ENCODE measurements at regions of chr1 and their contacts with region 1.

Region 1: GRCh38 chr1:169546087-169546995 is 39.9 kb downstream of the F5 start:
- DNase-seq: peak; percentile 40
- ATAC-seq: peak; percentile 92
- H3K4me3 ChIP-seq: no peak overlapping the region
- H3K27ac ChIP-seq: no peak overlapping the region
- H3K4me1 ChIP-seq: no peaks in the 10 kb centered on the region
- H3K27me3 ChIP-seq: no peaks in the 10 kb centered on the region
- CTCF ChIP-seq: peak; percentile 63 to 69 (median 66)
- EP300 ChIP-seq: no peak
- POLR2A ChIP-seq: no peak
- RAD21 ChIP-seq: peak; percentile 75

Region 2: DNA sequence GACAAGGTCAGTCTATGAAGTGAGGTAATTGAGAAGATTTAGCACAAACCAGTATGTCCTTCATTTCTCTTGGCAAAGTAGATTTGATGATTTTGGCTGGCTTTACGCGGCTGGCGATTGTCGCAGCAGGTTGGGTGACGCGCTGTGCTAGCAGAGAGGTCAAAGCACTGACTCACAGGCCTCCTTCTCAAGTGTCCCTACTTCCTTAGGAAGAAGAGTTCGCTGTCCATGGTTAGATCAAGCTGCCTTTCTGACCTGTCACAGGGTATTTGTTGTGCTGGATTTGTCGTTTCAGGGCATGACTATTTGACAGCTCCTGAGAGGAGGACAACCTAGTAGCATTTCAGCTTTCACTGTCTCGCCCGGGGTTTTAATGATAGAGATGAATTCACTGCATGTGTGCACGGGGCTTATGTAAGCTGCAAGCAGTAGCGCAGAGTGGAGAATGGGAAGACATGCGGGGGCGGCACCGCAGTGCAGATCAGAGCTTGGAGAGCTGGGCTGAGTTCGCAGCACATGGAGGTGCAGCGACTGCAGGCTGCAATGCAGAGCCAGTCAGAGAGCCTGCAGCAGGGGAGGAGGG is 937.1 kb before region 1 on chr1:
- CTCF ChIA-PET with region 1: interaction called, 15 read pairs
- POLR2A ChIA-PET with region 1: no interaction called
- RAD21 ChIA-PET with region 1: interaction called, 29 read pairs
- SMC1A ChIA-PET with region 1: interaction called, 6 read pairs
- in situ Hi-C with region 1: loop called (anchors 5 kb)
- intact Hi-C with region 1: no loop called
- DNase-seq: no peak
- ATAC-seq: no peak
- H3K4me3 ChIP-seq: no peak overlapping the region
- H3K27ac ChIP-seq: no peak overlapping the region
- H3K4me1 ChIP-seq: no peaks in the 10 kb centered on the region
- H3K27me3 ChIP-seq: peaks cover 0 to 5% of the 10 kb centered on the region in 2 experiments; a peak in 2 of 4 replicates
- CTCF ChIP-seq: no peak
- EP300 ChIP-seq: no peak
- POLR2A ChIP-seq: no peak
- RAD21 ChIP-seq: no peak

Region 3: GRCh38 chr1:169466259-169467230 is 79.8 kb before region 1 on chr1:
- CTCF ChIA-PET with region 1: interaction called, 27 read pairs
- POLR2A ChIA-PET with region 1: no interaction called
- RAD21 ChIA-PET with region 1: interaction called, 8 read pairs
- SMC1A ChIA-PET with region 1: interaction called, 26 read pairs
- in situ Hi-C with region 1: loop called (anchors 5 kb)
- intact Hi-C with region 1: loop called (anchors 1 kb)
- DNase-seq: no peak
- ATAC-seq: peak; percentile 66
- H3K4me3 ChIP-seq: no peak overlapping the region
- H3K27ac ChIP-seq: no peak overlapping the region
- H3K4me1 ChIP-seq: no peaks in the 10 kb centered on the region
- H3K27me3 ChIP-seq: no peaks in the 10 kb centered on the region
- CTCF ChIP-seq: peak; percentile 24 to 47 (median 27); a peak in 3 of 6 replicates
- EP300 ChIP-seq: no peak
- POLR2A ChIP-seq: no peak
- RAD21 ChIP-seq: 0 out of 2 replicates have a peak, but pooled peaks have one; percentile 31

Region 4: GRCh38 chr1:169485544-169486278 is 60.6 kb before region 1 on chr1 and contains the start of gene SLC19A2:
- CTCF ChIA-PET with region 1: interaction called, 4 read pairs
- POLR2A ChIA-PET with region 1: no interaction called
- RAD21 ChIA-PET with region 1: interaction called, 4 read pairs
- SMC1A ChIA-PET with region 1: no interaction called
- in situ Hi-C with region 1: no loop called
- intact Hi-C with region 1: loop called (anchors 1 kb)
- DNase-seq: peak; percentile 91
- ATAC-seq: peak; percentile 98
- H3K4me3 ChIP-seq: peak within 1 kb of the TSS; percentile 88
- H3K27ac ChIP-seq: peak within 1 kb of the TSS; percentile 68
- H3K4me1 ChIP-seq: peaks cover 8% of the 10 kb centered on the region
- H3K27me3 ChIP-seq: no peaks in the 10 kb centered on the region
- CTCF ChIP-seq: peak; percentile 30 to 53 (median 44); a peak in 5 of 6 replicates
- EP300 ChIP-seq: no peak; a peak in 1 of 4 replicates
- POLR2A ChIP-seq: peak; percentile 91
- RAD21 ChIP-seq: no peak
- polyA plus RNA-seq, gene SLC19A2: 1.2 to 1.3 TPM

Region 5: DNA sequence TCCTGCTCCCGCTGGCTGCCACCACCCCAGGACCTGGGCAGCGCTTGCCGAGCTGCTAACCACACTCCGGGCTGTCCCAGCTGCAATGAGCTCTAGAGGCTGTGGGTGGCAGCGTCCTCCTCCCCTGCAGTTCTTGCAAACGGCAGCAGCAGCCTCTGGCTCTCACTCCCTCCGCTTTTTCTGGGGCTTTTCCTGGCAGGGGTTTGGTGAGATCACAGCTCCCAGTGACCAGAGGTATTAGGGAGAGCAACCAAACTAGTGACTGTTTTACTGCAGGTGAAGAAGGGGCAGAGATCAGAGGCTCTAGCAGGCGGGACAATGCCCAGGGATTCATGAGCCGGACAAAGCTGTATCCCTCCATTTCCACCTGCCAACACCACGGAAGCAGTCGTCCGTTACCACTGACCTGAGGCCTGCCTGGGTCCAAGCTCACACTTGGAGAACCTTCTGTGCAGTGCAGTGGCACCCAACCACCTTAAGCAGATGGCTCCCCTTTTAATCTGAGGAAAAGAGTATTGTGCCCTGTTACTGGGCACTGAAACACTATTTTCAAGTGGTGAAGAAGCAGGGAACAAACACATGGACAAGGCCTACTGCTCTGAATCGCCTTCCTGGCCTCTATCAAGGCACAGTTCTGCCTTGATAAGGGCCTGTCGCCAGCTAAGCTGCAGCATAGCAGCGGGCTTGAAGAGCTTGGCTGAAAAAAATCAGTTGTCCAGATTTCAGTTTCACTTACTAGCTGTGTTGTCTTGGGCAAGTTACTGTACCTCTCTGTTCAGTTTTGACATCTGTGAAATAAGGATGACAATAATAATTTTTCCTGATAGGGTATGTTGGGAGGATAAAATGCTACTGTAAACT is 40.3 kb after region 1 on chr1 and contains the start of gene F5:
- CTCF ChIA-PET with region 1: interaction called, 7 read pairs
- POLR2A ChIA-PET with region 1: no interaction called
- RAD21 ChIA-PET with region 1: interaction called, 4 read pairs
- SMC1A ChIA-PET with region 1: no interaction called
- in situ Hi-C with region 1: no loop called
- intact Hi-C with region 1: loop called (anchors 5 kb)
- DNase-seq: no peak
- ATAC-seq: peak; percentile 99
- H3K4me3 ChIP-seq: 0 out of 2 replicates have a peak within 1 kb of the TSS, but pooled peaks have one; percentile 15
- H3K27ac ChIP-seq: no peak within 1 kb of the TSS
- H3K4me1 ChIP-seq: peaks cover 5% of the 10 kb centered on the region; the same call in 1 of the 2 replicates
- H3K27me3 ChIP-seq: no peaks in the 10 kb centered on the region; a peak in 1 of 4 replicates
- CTCF ChIP-seq: peak; percentile 71 to 87 (median 77)
- EP300 ChIP-seq: no peak
- POLR2A ChIP-seq: no peak
- RAD21 ChIP-seq: peak; percentile 52
- polyA plus RNA-seq, gene F5: 0.29 to 0.46 TPM

Region 6: DNA sequence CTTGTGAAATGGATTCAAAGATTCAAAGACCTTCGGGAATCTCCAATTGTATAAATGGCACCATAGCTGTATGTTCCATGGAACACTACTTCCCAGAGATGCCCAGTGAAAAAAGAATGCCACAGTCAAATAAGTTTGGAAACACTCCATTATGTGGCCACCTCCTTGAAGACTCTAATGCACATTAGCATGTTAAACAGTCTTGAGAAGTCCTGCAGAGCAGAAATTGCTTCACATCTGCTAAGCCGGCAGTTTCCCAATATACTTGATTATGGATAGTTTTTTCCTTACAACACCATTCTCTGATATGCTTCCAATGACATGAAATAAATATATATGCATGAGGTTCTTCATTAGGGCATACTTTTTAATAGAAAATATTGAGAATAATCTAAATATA is 200.2 kb after region 1 on chr1:
- CTCF ChIA-PET with region 1: no interaction called
- POLR2A ChIA-PET with region 1: no interaction called
- RAD21 ChIA-PET with region 1: no interaction called
- SMC1A ChIA-PET with region 1: no interaction called
- in situ Hi-C with region 1: no loop called
- intact Hi-C with region 1: no loop called
- DNase-seq: no peak
- ATAC-seq: no peak
- H3K4me3 ChIP-seq: no peak overlapping the region
- H3K27ac ChIP-seq: no peak overlapping the region
- H3K4me1 ChIP-seq: no peaks in the 10 kb centered on the region
- H3K27me3 ChIP-seq: no peaks in the 10 kb centered on the region
- CTCF ChIP-seq: no peak
- EP300 ChIP-seq: no peak
- POLR2A ChIP-seq: no peak
- RAD21 ChIP-seq: no peak

Region 7: GRCh38 chr1:169802888-169803287 is 256.5 kb after region 1 on chr1:
- CTCF ChIA-PET with region 1: interaction called, 11 read pairs
- POLR2A ChIA-PET with region 1: no interaction called
- RAD21 ChIA-PET with region 1: interaction called, 3 read pairs
- SMC1A ChIA-PET with region 1: interaction called, 3 read pairs
- in situ Hi-C with region 1: no loop called
- intact Hi-C with region 1: no loop called
- DNase-seq: no peak
- ATAC-seq: peak; percentile 31
- H3K4me3 ChIP-seq: no peak overlapping the region
- H3K27ac ChIP-seq: no peak overlapping the region
- H3K4me1 ChIP-seq: no peaks in the 10 kb centered on the region
- H3K27me3 ChIP-seq: no peaks in the 10 kb centered on the region
- CTCF ChIP-seq: no peak
- EP300 ChIP-seq: no peak
- POLR2A ChIP-seq: no peak
- RAD21 ChIP-seq: no peak

Measured in GM12878 (cell line).